Adrenal gland (tissue), 19 donors: ENCODE measurements at regions of chr6 and their contacts with region 1.

Region 1: DNA sequence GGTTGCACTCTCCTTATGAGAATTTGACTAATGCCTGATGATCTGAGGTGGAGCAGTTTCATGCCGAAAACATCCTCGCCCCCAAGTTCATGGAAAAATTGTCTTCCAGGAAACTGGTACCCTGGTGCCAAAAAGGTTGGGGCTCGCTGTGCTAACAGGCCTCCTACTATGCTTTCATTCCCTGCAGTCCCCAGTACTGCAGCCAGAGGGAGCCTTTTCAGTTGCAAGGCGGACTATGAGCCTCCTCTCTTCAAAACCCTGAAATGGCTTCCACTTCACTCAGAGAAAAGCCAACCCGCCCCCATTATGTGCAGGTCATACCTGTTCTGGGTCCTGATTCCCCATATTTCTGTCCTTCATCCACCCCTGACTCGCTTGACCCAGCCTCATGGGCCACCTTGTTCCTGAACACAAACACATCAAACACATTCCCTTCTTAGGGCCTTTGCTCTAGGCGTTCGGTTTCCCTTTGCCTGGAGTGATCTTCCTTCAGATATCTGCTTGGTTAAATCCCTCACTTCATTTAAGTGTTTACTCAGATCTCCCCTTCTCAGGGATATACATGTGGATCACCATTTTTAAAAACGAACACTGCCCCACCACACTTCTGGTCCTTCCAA is 173.7 kb downstream of the PHACTR1 start:
- DNase-seq: peak in 1 of 7 donors; percentile 7
- H3K4me3 ChIP-seq: no peak overlapping the region
- H3K27ac ChIP-seq: no peak overlapping the region
- H3K4me1 ChIP-seq: no peaks in the 10 kb centered on the region
- H3K27me3 ChIP-seq: peaks cover 5% of the 10 kb centered on the region
- CTCF ChIP-seq: peak in 2 of 6 experiments; percentile 18 to 19
- POLR2A ChIP-seq: no peak

Region 2: GRCh38 chr6:11833626-11834592 is 1056.4 kb before region 1 on chr6:
- intact Hi-C with region 1: no loop called
- DNase-seq: no peak
- H3K4me3 ChIP-seq: no peak overlapping the region
- H3K27ac ChIP-seq: no peak overlapping the region
- H3K4me1 ChIP-seq: no peaks in the 10 kb centered on the region
- H3K27me3 ChIP-seq: no peaks in the 10 kb centered on the region
- CTCF ChIP-seq: no peak
- POLR2A ChIP-seq: no peak

Region 3: DNA sequence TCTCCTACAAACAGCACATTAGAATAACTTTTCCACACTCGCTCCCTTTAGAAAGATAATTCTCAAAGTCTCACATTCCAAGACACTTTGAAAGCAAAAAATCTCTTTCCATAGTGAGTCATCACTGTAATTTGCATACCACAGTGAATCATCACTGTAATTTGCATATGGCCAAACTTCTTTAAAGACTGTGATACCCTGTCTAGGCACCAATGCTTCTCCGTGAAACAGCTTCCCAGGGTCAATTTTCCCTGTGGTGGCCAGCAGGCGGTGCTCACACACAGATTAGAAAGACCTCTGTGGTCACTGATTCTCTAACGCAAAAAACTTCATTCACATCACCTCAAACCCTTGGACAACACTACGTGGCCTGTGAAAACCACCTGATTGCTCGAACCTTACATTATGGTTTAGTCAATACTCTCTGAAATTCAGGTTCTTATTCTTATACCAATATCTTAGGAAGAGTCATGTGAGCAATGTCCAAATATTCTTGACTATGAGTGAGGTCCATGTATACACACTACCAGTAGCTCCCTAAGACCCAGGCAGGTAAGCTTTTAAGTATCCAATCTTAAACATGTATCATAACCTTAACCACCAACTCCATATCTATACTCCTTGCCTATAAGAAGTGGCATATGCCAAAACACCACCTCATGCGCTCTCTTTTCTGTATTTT is 252.2 kb before region 1 on chr6:
- intact Hi-C with region 1: loop called in 1 of 2 experiments (anchors 10 kb)
- DNase-seq: peak; percentile 25 to 71 (median 47)
- H3K4me3 ChIP-seq: no peak overlapping the region
- H3K27ac ChIP-seq: no peak overlapping the region
- H3K4me1 ChIP-seq: no peaks in the 10 kb centered on the region
- H3K27me3 ChIP-seq: peaks cover 4% of the 10 kb centered on the region
- CTCF ChIP-seq: peak; percentile 37 to 70 (median 68)
- POLR2A ChIP-seq: no peak